H1 (cell line): ENCODE measurements at regions of chr11 and their contacts with region 1.

Region 1: DNA sequence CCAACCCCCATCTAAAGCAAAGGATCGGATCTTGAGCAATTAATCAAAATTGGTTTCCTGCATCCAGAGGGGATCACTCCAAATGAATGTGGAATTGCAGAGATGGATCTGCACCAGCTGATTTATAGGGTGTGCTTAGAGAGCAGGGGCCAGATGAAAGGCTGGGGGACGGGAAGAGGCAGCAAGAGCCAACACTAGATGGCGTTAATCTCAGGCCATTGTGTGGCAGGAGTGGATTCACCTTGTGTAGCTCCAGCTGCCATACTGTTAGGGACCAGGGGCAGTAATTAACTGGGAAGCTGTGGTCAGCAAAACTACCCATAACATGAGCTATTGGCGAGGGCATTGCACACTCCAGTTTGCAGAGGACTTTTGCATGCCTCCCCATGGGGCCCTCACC is 35.6 kb downstream of the SERPINH1 start:
- DNase-seq: no peak
- H3K4me3 ChIP-seq: no peak overlapping the region
- H3K27ac ChIP-seq: no peak overlapping the region
- H3K4me1 ChIP-seq: peaks cover 0 to 4% (median 0%) of the 10 kb centered on the region in 4 experiments; a peak in 2 of 7 replicates
- H3K27me3 ChIP-seq: peaks cover 0 to 3% (median 0%) of the 10 kb centered on the region in 4 experiments; a peak in 1 of 7 replicates
- CTCF ChIP-seq: peak; percentile 78 to 93 (median 90)
- EP300 ChIP-seq: no peak
- POLR2A ChIP-seq: no peak
- RAD21 ChIP-seq: peak; percentile 68 to 74

Region 2: GRCh38 chr11:75547580-75548058 is 50.0 kb before region 1 on chr11:
- CTCF ChIA-PET with region 1: interaction called, 10 read pairs
- POLR2A ChIA-PET with region 1: interaction called, 1,120 read pairs
- DNase-seq: peak in 1 of 2 experiments; percentile 91
- H3K4me3 ChIP-seq: no peak overlapping the region
- H3K27ac ChIP-seq: no peak overlapping the region
- H3K4me1 ChIP-seq: peaks cover 0 to 4% (median 2%) of the 10 kb centered on the region in 4 experiments; a peak in 5 of 7 replicates
- H3K27me3 ChIP-seq: no peaks in the 10 kb centered on the region; a peak in 1 of 7 replicates
- CTCF ChIP-seq: peak; percentile 72 to 89 (median 82)
- EP300 ChIP-seq: no peak
- POLR2A ChIP-seq: peak in 1 of 2 experiments; percentile 19; a peak in 1 of 3 replicates
- RAD21 ChIP-seq: peak; percentile 89 to 92

Region 3: DNA sequence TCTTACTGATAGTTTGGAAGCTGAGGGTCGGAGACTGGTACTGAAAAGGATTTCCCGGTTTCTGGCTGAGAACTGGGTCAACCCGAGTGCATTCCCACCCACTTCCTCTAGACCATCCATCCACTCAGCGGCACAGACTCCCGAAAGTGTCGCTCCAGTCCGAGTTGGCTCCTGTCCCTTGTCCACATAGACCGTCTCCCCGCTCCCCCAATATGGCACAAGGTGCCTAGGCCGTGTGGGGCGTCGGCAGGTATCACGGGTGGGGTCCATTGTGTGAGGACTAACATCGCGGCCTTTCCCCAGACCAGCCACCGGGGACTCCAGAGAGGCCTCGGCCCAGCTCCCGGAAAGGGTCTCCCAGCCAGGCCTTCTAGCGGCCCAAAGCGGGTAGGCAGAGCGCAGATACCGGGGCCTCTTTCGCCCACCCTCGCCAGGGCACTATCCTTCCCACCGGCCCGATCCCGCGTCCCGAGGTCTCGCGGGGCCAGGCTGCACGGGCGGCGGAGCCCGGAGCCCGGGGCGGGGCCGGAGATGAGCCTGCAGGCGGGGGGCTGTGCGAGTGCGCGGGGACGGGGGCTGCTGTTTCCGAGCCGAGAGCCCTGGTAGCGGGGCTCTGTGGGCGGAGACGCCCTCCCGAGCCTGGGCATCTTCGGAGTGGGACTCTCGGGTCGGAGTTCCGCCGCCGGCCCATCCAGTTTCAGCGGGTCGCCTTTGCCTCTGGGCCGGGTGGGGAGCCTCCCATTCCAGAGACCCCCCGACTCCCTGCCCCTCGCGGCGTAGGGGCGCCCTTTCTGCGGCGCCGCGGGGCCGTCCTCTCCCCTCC is 14.5 kb before region 1 on chr11:
- CTCF ChIA-PET with region 1: interaction called, 74 read pairs
- POLR2A ChIA-PET with region 1: interaction called, 1,120 read pairs
- DNase-seq: peak in 1 of 2 experiments; percentile 88
- H3K4me3 ChIP-seq: peak overlapping the region; percentile 58 to 77 (median 66)
- H3K27ac ChIP-seq: peak overlapping the region; percentile 50; the same call in 1 of the 2 replicates
- H3K4me1 ChIP-seq: peaks cover 2 to 17% (median 14%) of the 10 kb centered on the region in 4 experiments
- H3K27me3 ChIP-seq: no peaks in the 10 kb centered on the region
- CTCF ChIP-seq: peak in 2 of 3 experiments; percentile 25 to 39; a peak in 3 of 4 replicates
- EP300 ChIP-seq: no peak; a peak in 1 of 3 replicates
- POLR2A ChIP-seq: peak; percentile 42 to 70; a peak in 2 of 3 replicates
- RAD21 ChIP-seq: peak; percentile 1 to 16; a peak in 1 of 4 replicates

Region 4: DNA sequence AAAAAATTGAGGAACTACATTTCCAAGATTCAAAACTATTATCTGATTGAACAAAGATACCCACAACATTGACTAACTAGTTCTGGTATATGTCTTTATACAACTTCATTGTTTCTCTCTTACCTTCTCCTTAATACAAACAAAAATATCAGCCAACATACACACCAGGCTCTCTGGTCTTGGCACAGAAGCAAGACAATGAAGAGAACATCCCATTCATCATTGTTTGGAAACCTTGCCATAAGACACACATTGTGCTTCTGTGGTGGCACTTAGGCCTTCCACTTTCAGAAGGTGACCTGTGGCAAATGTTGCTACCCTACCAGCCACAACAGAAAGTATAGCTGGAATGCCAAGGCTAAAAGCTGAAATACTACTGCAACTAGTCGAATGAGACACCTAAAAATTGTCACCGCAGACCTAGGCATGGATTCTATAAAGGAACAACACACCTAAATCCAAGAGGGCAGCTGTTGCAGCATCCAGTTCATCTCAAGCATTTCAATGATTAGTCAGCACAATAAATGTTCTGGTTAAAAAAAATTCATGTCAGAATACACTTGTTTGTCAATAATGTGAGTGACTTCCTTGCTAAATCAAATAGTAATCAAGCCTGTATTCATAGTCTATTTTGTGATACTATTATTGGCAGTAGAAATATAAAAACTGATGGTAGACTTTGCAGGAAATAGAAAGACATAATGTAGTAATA is 44.9 kb after region 1 on chr11:
- CTCF ChIA-PET with region 1: interaction called, 14 read pairs
- POLR2A ChIA-PET with region 1: no interaction called
- DNase-seq: no peak
- H3K4me3 ChIP-seq: no peak overlapping the region
- H3K27ac ChIP-seq: no peak overlapping the region
- H3K4me1 ChIP-seq: no peaks in the 10 kb centered on the region
- H3K27me3 ChIP-seq: no peaks in the 10 kb centered on the region; a peak in 1 of 7 replicates
- CTCF ChIP-seq: no peak
- EP300 ChIP-seq: no peak
- POLR2A ChIP-seq: no peak
- RAD21 ChIP-seq: no peak

Region 5: DNA sequence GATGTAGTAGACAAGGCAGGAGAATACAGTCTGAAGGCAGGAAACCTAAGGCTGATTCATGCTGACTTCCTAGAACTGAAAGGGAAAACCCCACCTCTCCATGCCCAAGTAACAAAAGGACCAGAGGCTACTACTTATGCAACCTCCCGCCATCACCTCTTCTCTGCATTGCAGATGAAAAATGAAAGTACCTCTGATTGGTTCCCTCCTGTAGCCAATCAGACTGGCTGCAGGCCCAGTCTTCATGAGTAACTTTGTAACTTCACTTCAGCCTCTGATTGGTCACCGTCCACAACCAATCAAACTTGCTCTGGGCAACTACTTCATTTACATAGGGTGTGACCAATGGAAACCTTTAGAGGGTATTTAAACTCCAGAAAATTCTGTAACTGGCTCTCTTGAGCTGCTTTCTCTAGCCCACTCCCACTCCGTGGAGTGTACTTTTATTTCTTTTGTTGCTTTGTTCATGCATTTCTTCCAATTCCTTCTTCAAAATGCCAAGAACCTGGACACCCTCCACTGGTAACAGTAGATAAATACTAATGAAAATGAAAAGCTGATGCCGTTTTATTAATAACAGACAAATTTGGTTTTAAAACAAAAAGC is 76.4 kb after region 1 on chr11:
- CTCF ChIA-PET with region 1: interaction called, 16 read pairs
- POLR2A ChIA-PET with region 1: no interaction called
- DNase-seq: no peak
- H3K4me3 ChIP-seq: no peak overlapping the region
- H3K27ac ChIP-seq: no peak overlapping the region
- H3K4me1 ChIP-seq: no peaks in the 10 kb centered on the region
- H3K27me3 ChIP-seq: peaks cover 18 to 32% (median 24%) of the 10 kb centered on the region in 4 experiments
- CTCF ChIP-seq: no peak
- EP300 ChIP-seq: no peak
- POLR2A ChIP-seq: no peak
- RAD21 ChIP-seq: no peak